Activated T-helper 1 cell treated with anti-CD3 and anti-CD28 coated beads, Interleukin-12 subunit alpha, Interleukin-12 subunit beta, Interleukin-2, Interleukin-4 antibody, amounts not matched to agents 30 ng/mL and 10 ng/mL and 1 ng/mL, durations not matched to agents 14 hours and 24 hours and 36 hours (primary cell): ENCODE measurements at regions of chr3 and their contacts with region 1.

Region 1: GRCh38 chr3:58008140-58009025 is at the start of gene FLNB:
- DNase-seq: peak; percentile 65
- H3K4me3 Mint-ChIP-seq: peak within 1 kb of the TSS; percentile 85
- H3K27ac Mint-ChIP-seq: peak within 1 kb of the TSS; percentile 70
- H3K4me1 Mint-ChIP-seq: peaks cover 39% of the 10 kb centered on the region
- H3K27me3 Mint-ChIP-seq: peaks cover 2% of the 10 kb centered on the region
- total RNA-seq, gene FLNB: 22.3 and 24.1 TPM in 2 replicates

Region 2: GRCh38 chr3:57983734-57984518 is 24.5 kb before region 1 on chr3:
- intact Hi-C with region 1: loop called (anchors 1 kb)
- DNase-seq: peak; percentile 52
- H3K4me3 Mint-ChIP-seq: peak overlapping the region; percentile 6
- H3K27ac Mint-ChIP-seq: peak overlapping the region; percentile 90
- H3K4me1 Mint-ChIP-seq: peaks cover 22% of the 10 kb centered on the region
- H3K27me3 Mint-ChIP-seq: no peaks in the 10 kb centered on the region

Region 3: DNA sequence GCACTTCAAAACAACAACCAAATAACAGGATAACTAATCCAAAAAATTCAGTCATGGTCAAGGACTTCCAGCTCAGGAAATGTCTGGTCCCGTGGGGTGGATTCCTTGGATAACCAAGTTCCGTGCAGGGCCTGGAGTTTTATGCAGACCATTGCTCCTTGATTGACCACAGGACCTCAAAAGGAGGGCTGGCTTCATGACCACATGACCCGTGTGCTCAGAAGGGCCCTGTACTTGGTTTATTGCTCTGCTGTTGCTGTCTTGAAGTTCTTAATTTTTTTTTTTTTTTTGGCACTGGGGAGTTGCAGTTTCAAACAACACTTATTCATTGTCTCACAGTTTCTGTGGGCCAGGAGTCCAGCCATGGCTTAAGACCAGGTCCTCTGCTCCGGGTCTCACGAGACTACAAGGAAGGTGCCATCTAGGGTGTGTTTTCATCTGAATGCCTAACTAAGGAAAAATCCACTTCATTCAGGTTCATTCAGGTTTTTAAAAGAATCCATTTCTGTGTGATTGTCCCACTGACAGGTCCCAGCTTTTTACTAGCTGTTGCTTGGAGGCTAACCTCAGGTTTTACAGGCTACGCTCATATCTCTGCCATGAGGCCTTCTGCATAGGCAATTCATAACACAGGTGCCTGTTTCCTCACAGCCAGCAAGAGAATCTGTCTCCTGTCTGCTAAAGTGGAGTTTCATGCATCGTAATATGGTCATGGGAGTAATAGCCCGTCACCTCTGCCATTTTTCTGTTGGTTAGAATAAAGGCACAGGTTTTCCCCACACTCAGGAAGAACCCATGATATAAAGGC is 65.1 kb after region 1 on chr3:
- intact Hi-C with region 1: loop called (anchors 2 kb)
- DNase-seq: no peak
- H3K4me3 Mint-ChIP-seq: no peak overlapping the region
- H3K27ac Mint-ChIP-seq: peak overlapping the region; percentile 3
- H3K4me1 Mint-ChIP-seq: peaks cover 26% of the 10 kb centered on the region
- H3K27me3 Mint-ChIP-seq: no peaks in the 10 kb centered on the region

Region 4: DNA sequence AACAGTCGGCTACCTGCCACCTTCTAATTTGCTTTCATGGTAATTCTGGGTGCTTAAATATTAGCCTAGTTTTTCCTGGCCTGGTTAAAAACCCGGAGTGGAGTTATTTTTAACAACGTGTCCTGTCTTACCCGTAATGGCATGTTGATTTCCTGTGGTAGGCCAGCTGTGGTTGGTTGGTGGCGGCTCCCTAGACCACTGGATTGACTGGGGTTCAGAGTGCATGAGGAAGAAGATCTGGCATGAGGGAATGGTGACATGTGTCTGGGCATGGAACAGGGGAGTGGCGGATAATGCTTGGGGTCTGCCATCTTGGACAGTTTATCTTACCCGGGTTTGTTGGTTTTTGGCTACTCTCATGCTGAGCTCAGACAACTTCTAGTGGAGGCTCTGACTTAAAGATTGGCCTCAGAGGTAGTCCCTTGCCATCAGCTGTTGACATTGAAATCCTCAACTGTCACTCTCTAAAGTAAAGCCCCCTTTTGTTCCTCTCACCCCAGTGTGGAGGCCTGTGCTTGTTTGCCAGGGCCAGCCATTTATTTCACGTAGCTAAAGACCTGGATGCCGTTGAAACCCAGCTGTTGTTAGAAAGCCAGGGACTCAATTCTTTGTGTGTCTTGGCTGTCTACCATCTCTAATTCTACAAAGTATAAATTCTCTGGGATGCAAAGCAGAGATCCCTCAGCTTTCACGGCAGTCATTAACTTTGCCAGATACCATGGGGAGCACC is 120.8 kb after region 1 on chr3:
- intact Hi-C with region 1: no loop called
- DNase-seq: no peak
- H3K4me3 Mint-ChIP-seq: no peak overlapping the region
- H3K27ac Mint-ChIP-seq: no peak overlapping the region
- H3K4me1 Mint-ChIP-seq: peaks cover 5% of the 10 kb centered on the region
- H3K27me3 Mint-ChIP-seq: no peaks in the 10 kb centered on the region

Region 5: GRCh38 chr3:58177747-58178527 is 169.6 kb after region 1 on chr3:
- intact Hi-C with region 1: loop called (anchors 2 kb)
- DNase-seq: peak; percentile 81
- H3K4me3 Mint-ChIP-seq: peak overlapping the region; percentile 73
- H3K27ac Mint-ChIP-seq: no peak overlapping the region
- H3K4me1 Mint-ChIP-seq: peaks cover 12% of the 10 kb centered on the region
- H3K27me3 Mint-ChIP-seq: peaks cover 8% of the 10 kb centered on the region

Region 6: DNA sequence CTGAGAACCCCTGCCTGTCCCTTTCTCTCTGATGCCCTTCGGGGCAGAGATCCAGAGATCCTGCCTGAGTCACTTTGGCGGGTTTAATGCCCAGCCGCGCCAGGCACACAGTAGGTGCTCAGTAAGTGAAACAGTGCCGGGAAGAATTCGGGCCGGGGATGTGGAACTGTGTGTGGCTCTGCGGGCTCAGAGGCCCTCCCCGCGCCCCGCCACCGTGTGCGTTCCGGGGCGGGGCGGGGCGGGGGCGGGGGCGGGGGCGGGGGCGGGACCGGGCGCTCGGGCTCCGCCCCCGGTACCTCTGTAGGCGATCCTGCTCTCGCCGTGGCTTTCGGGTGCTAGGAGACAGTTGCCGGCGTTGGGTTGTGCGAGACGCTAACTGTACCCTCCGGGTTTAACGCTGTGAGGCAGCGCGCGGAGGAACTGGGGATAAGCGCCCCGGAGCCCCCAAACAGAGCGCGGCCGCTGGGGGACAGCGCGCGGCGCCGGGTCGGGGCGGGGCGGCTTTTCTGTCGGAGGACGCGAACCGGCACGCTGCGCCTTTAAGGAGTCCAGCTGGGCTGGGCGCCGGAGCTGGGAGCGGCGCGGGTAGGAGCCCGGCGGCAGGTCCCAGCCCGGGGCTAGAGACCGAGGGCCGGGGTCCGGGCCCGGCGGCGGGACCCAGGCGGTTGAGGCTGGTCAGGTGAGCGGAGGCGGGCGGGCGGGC is 229.0 kb after region 1 on chr3 and contains the start of gene ABHD6:
- intact Hi-C with region 1: loop called (anchors 5 kb)
- DNase-seq: peak; percentile 78
- H3K4me3 Mint-ChIP-seq: peak within 1 kb of the TSS; percentile 90
- H3K27ac Mint-ChIP-seq: peak within 1 kb of the TSS; percentile 67
- H3K4me1 Mint-ChIP-seq: peaks cover 12% of the 10 kb centered on the region
- H3K27me3 Mint-ChIP-seq: peaks cover 32% of the 10 kb centered on the region
- total RNA-seq, gene ABHD6: 9.2 and 10.1 TPM in 2 replicates